Right cardiac atrium (tissue), 5 donors: ENCODE measurements at regions of chr9 and their contacts with region 1.

Region 1: GRCh38 chr9:113409883-113410206 is 630 bp downstream of the POLE3 start:
- DNase-seq: no peak
- ATAC-seq: no peak
- H3K4me3 ChIP-seq: peak overlapping the region; percentile 94
- H3K27ac ChIP-seq: peak overlapping the region; percentile 84
- H3K4me1 ChIP-seq: no peaks in the 10 kb centered on the region
- H3K27me3 ChIP-seq: no peaks in the 10 kb centered on the region

Region 2: GRCh38 chr9:113309204-113309813 is 100.5 kb before region 1 on chr9:
- intact Hi-C with region 1: loop called in 3 of 4 experiments (anchors 5 to 10 kb)
- DNase-seq: no peak
- ATAC-seq: peak in 1 of 2 donors; percentile 55
- H3K4me3 ChIP-seq: no peak overlapping the region
- H3K27ac ChIP-seq: no peak overlapping the region
- H3K4me1 ChIP-seq: no peaks in the 10 kb centered on the region
- H3K27me3 ChIP-seq: no peaks in the 10 kb centered on the region